Activated naive CD4-positive, alpha-beta T cell treated with anti-CD3 and anti-CD28 coated beads for 36 hours (primary cell): ENCODE measurements at regions of chr3 and their contacts with region 1.

Region 1: GRCh38 chr3:67605377-67605776 is 49.0 kb downstream of the SUCLG2 start:
- DNase-seq: peak; percentile 31
- H3K4me3 Mint-ChIP-seq: no peak overlapping the region
- H3K27ac Mint-ChIP-seq: peak overlapping the region; percentile 37
- H3K4me1 Mint-ChIP-seq: peaks cover 64% of the 10 kb centered on the region
- H3K27me3 Mint-ChIP-seq: no peaks in the 10 kb centered on the region

Region 2: DNA sequence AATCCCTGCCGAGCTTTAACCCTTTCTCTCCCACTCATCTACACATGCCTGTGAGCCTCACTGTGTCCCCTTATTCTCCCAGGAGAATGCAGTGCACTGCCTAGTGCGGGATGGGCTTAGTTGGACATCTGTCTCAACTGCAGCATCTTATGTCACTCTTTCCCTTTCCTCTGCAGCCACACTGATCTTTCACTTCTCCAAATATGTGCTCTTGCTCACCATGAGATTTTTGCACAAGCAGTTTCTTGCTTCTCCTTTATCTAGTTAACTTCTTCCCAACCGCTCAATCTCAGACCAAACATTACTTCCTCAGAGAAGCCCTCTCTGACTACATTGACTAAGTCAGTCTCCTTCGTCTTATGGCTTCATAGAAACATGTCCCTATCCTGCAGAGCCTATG is 314.9 kb before region 1 on chr3:
- CTCF ChIA-PET with region 1: no interaction called
- intact Hi-C with region 1: no loop called
- DNase-seq: no peak
- H3K4me3 Mint-ChIP-seq: no peak overlapping the region
- H3K27ac Mint-ChIP-seq: no peak overlapping the region
- H3K4me1 Mint-ChIP-seq: no peaks in the 10 kb centered on the region
- H3K27me3 Mint-ChIP-seq: no peaks in the 10 kb centered on the region

Region 3: DNA sequence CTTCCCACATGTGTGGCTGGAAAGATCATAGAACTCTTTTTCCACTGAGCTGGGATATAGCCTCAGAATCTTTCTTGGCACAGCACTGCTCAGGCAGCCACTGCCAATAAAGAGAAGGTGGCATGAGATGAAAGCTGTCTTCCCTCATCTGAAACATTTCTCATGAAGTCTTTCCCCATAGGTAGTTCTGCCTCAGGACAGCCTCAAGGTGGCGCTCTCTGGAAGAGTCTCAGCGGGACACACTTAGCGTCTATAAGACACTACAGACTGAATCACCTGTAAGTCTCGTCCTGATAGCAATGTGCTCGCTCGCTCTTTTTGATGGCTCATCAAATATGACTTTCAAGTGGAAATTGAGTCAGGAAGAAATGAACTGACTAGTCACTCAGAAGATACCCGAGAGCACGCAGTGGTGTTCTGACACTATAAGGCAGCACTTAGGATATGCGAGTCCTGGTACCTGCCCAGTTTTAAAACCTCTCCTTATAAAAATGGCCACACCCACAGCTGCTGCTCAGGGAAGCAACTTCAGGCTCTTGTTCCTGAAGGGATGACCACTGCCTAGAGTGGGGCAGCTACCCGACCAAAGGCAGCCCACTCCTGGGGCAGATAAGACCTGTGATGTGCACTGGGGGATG is 220.5 kb before region 1 on chr3:
- CTCF ChIA-PET with region 1: interaction called, 3 read pairs
- intact Hi-C with region 1: loop called (anchors 2 kb)
- DNase-seq: peak; percentile 67
- H3K4me3 Mint-ChIP-seq: no peak overlapping the region
- H3K27ac Mint-ChIP-seq: no peak overlapping the region
- H3K4me1 Mint-ChIP-seq: peaks cover 31% of the 10 kb centered on the region
- H3K27me3 Mint-ChIP-seq: no peaks in the 10 kb centered on the region

Region 4: GRCh38 chr3:67940210-67940952 is 335.0 kb after region 1 on chr3:
- CTCF ChIA-PET with region 1: no interaction called
- intact Hi-C with region 1: no loop called
- DNase-seq: no peak
- H3K4me3 Mint-ChIP-seq: no peak overlapping the region
- H3K27ac Mint-ChIP-seq: no peak overlapping the region
- H3K4me1 Mint-ChIP-seq: peaks cover 20% of the 10 kb centered on the region
- H3K27me3 Mint-ChIP-seq: no peaks in the 10 kb centered on the region

Region 5: DNA sequence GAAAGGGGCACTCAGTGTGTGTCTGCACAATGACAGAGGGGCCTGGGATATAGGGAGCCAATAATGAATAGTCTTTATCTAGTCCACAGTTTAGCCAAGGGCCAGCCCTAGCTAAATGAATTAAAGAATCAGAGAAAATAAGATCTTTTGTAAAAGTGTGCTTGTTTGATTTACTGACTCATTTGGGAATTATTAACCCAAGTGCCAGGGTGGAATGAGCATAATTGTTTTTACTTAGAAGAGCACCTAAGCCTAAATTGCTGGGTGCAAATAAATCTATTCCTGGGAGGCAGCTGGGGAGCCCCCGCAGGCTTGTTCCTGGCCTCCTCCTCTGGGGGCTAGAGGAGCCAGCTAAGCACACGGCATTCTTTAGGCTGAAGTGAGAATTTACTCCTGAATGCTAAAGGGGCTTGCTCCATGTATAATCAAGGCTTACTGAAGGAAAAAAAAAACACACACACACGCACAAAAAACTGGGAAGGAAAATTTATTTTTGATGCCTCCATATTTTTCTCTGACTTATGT is 454.3 kb after region 1 on chr3:
- CTCF ChIA-PET with region 1: no interaction called
- intact Hi-C with region 1: no loop called
- DNase-seq: no peak
- H3K4me3 Mint-ChIP-seq: no peak overlapping the region
- H3K27ac Mint-ChIP-seq: no peak overlapping the region
- H3K4me1 Mint-ChIP-seq: peaks cover 68% of the 10 kb centered on the region
- H3K27me3 Mint-ChIP-seq: no peaks in the 10 kb centered on the region